ENCODE measurements at regions of chr22 and their contacts with region 1.

Region 1: DNA sequence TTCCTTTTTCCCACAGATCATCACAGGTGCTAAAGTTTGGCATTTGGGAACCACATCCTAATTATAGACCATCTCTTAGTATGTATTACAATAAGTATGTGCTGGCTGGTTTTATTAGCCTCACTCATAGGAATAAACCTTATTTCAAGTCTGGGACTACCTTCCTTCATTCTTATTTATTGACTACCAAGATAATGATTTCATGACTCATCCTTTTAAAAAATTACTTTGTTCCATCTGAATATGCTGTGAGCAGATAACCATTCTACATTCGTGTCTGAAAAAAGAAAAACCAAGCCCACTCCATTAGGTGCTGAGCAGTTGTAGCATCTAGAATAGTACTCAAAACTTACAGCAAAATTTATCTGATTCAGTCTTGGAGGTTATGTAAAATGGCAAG is 12.3 kb downstream of the TNRC6B start:
- DNase-seq: no peak
- ATAC-seq: no peak
- H3K4me3 ChIP-seq: no peak overlapping the region
- H3K4me3 Mint-ChIP-seq: no peak overlapping the region
- H3K27ac ChIP-seq: peak overlapping the region in 1 of 2 donors; percentile 21
- H3K27ac Mint-ChIP-seq: no peak overlapping the region
- H3K4me1 ChIP-seq: peaks cover 0 to 20% of the 10 kb centered on the region in 2 donors
- H3K4me1 Mint-ChIP-seq: peaks cover 66% of the 10 kb centered on the region
- H3K27me3 ChIP-seq: no peaks in the 10 kb centered on the region
- H3K27me3 Mint-ChIP-seq: no peaks in the 10 kb centered on the region
- CTCF ChIP-seq: no peak

Region 2: DNA sequence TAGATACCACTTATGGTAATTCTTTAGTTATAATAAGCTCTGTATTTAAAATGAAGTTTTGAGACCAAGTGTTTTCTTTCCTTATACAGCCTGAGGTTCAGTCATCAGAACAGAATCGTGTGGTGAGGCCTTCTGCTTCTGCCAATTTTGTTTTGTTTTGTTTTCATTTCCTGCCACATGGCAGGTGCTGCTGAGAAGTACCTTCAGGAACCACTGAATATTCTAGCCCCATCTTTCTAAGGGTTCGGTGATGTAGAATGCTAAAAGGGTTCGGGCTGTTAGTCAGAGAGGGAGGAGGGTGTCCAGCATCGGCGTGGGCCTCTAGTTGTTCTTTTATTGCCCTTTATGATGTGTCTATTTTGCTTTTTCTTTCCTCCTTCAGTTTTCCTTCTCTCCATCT is 13.6 kb after region 1 on chr22:
- CTCF ChIA-PET with region 1: interaction called, 4 read pairs
- POLR2A ChIA-PET with region 1: no interaction called
- intact Hi-C with region 1: loop called (anchors 2 kb)
- DNase-seq: peak; percentile 61
- ATAC-seq: peak; percentile 84
- H3K4me3 ChIP-seq: no peak overlapping the region
- H3K4me3 Mint-ChIP-seq: peak overlapping the region; percentile 58
- H3K27ac ChIP-seq: peak overlapping the region in 1 of 2 donors; percentile 80
- H3K27ac Mint-ChIP-seq: peak overlapping the region; percentile 81
- H3K4me1 ChIP-seq: peaks cover 35 to 40% of the 10 kb centered on the region in 2 donors
- H3K4me1 Mint-ChIP-seq: peaks cover 62% of the 10 kb centered on the region
- H3K27me3 ChIP-seq: no peaks in the 10 kb centered on the region
- H3K27me3 Mint-ChIP-seq: no peaks in the 10 kb centered on the region
- CTCF ChIP-seq: no peak